ENCODE measurements at regions of chr1 and their contacts with region 1.

Region 1: GRCh38 chr1:17540255-17541001 is 930 bp downstream of the ARHGEF10L start:
- DNase-seq: no peak
- H3K4me3 Mint-ChIP-seq: peak overlapping the region; percentile 82
- H3K27ac Mint-ChIP-seq: peak overlapping the region; percentile 75
- H3K4me1 Mint-ChIP-seq: peaks cover 18% of the 10 kb centered on the region
- H3K27me3 Mint-ChIP-seq: no peaks in the 10 kb centered on the region
- CTCF ChIP-seq: no peak

Region 2: GRCh38 chr1:17553969-17554700 is 13.7 kb after region 1 on chr1:
- CTCF ChIA-PET with region 1: interaction called, 11 read pairs
- intact Hi-C with region 1: no loop called
- DNase-seq: peak; percentile 78
- H3K4me3 Mint-ChIP-seq: peak overlapping the region; percentile 32
- H3K27ac Mint-ChIP-seq: peak overlapping the region; percentile 93
- H3K4me1 Mint-ChIP-seq: peaks cover 58% of the 10 kb centered on the region
- H3K27me3 Mint-ChIP-seq: no peaks in the 10 kb centered on the region
- CTCF ChIP-seq: no peak